HCT116 (cell line): ENCODE measurements at regions of chr22 and their contacts with region 1.

Region 1: DNA sequence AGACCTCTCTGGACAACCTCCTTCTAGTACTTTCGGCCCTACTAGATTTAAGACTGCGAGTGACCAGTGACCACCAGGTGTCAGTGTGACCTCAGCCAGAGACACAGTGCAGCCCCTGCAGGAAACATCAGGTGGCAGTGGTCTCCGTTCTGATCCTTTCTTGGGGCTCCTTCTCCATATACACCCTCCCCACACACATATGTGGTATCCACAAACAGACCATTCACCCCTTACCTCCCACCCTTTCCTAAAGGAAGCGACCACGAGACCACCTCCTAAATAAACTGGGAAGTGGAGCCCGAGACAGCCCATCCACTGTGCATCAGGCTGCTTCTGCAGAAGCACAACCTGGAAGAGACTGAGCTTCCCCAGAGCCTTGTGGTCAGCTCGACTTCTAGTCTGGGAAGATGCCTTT is 38.5 kb upstream of the CYP2D6 start:
- DNase-seq: peak; percentile 56
- ATAC-seq: peak; percentile 95
- H3K4me3 ChIP-seq: no peak overlapping the region
- H3K27ac ChIP-seq: no peak overlapping the region
- H3K4me1 ChIP-seq: no peaks in the 10 kb centered on the region
- H3K27me3 ChIP-seq: no peaks in the 10 kb centered on the region
- CTCF ChIP-seq: peak; percentile 98 to 99 (median 99)
- POLR2A ChIP-seq: no peak
- RAD21 ChIP-seq: peak; percentile 96

Region 2: DNA sequence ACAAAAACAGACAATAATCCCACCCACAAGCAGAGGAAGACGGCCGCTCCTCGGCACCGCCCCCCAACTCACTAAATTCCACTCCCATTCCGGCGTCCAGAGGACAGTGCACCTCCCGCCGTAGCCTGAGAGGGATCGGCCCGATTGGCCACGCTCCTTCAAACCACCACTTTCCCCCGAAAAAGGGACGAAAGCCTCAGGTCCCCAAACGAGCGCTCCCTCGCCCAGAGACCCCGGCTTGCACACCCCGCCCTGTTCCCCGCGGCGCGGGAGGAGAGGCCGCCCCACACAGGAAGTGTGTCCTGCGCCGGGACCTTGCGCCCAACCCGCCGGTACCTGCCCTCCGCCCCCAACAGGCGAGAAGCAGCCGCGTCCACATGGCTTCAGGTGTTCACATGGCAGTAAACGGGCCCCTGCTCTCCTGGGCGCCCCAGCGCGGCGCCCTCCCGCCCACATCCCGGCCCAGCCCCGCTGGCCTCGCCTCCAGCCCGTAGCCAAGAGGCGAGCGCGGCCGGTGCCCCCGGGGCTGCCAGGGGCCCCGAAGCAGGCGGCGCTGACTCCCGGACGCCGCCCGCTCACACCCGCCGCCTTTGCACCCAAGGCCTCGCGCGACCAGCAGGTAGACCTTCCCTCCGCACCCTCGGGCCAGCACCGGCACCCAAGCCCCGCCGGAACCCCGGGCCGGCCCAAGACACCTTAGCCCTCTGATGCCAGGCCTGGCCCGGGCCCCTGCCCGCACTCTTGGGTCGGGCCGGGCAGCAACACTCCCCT is 100.5 kb after region 1 on chr22:
- CTCF ChIA-PET with region 1: no interaction called
- POLR2A ChIA-PET with region 1: no interaction called
- RAD21 ChIA-PET with region 1: interaction called in 1 of 2 experiments, 5 read pairs
- intact Hi-C with region 1: loop called (anchors 2 kb)
- DNase-seq: peak; percentile 48
- ATAC-seq: peak; percentile 81
- H3K4me3 ChIP-seq: peak overlapping the region; percentile 85 to 91
- H3K27ac ChIP-seq: peak overlapping the region; percentile 99
- H3K4me1 ChIP-seq: peaks cover 9 to 19% of the 10 kb centered on the region in 2 experiments; a peak in 3 of 4 replicates
- H3K27me3 ChIP-seq: no peaks in the 10 kb centered on the region
- CTCF ChIP-seq: peak in 1 of 3 experiments; percentile 18; a peak in 1 of 6 replicates
- POLR2A ChIP-seq: no peak
- RAD21 ChIP-seq: peak; percentile 17; the same call in 1 of the 2 replicates

Region 3: GRCh38 chr22:42313804-42314581 is 144.9 kb after region 1 on chr22:
- CTCF ChIA-PET with region 1: no interaction called
- POLR2A ChIA-PET with region 1: no interaction called
- RAD21 ChIA-PET with region 1: no interaction called
- intact Hi-C with region 1: loop called (anchors 1 kb)
- DNase-seq: peak; percentile 75
- ATAC-seq: peak; percentile 87
- H3K4me3 ChIP-seq: peak overlapping the region in 1 of 2 experiments; percentile 34; a peak in 2 of 4 replicates
- H3K27ac ChIP-seq: peak overlapping the region; percentile 38
- H3K4me1 ChIP-seq: peaks cover 46 to 65% of the 10 kb centered on the region in 2 experiments
- H3K27me3 ChIP-seq: no peaks in the 10 kb centered on the region
- CTCF ChIP-seq: peak; percentile 64 to 76 (median 67); a peak in 5 of 6 replicates
- POLR2A ChIP-seq: no peak
- RAD21 ChIP-seq: peak; percentile 77

Region 4: DNA sequence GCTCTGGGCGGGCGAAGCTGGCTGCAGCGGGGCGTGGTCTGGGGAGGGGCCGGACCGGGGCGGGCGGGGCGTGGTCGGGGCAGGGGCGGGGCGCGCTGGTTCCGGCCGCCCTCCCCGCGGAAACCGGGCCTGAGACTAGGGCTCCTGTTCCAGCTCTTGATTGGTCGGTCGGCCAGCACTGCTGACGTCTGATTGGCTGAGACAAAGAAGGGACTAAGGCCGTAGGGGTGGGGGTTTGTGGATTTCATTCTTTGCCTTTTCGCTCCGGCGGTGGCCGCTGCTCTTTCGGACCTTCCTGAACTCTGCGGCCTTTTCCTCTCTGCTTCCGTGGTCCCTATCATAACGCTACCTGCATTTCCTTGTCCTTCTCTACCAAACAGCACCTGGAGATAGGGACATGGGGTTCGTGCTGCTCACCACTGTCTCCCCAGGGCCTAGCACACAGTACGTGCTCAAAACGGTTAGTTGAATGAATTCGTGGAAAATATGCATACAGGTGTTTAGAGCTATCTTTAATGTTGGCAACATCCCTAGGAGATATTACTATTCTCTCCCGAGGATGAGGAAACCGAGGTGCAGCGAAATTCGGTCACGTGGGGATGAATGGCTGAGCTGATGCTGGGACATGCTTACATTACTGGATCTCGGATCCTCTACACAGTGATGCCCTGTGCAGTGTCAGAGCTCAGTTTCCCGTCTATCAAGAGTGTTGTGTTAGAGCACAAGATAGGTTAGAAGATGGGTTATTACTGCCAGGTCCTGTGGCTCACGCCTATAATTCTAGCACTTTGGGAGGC is 200.4 kb after region 1 on chr22:
- CTCF ChIA-PET with region 1: interaction called, 3 read pairs
- POLR2A ChIA-PET with region 1: no interaction called
- RAD21 ChIA-PET with region 1: no interaction called
- intact Hi-C with region 1: loop called (anchors 2 kb)
- DNase-seq: peak; percentile 88
- ATAC-seq: peak; percentile 95
- H3K4me3 ChIP-seq: peak overlapping the region; percentile 86 to 94
- H3K27ac ChIP-seq: peak overlapping the region; percentile 56
- H3K4me1 ChIP-seq: peaks cover 14 to 24% of the 10 kb centered on the region in 2 experiments
- H3K27me3 ChIP-seq: no peaks in the 10 kb centered on the region
- CTCF ChIP-seq: no peak
- POLR2A ChIP-seq: peak; percentile 60
- RAD21 ChIP-seq: no peak

Region 5: GRCh38 chr22:42437488-42438292 is 268.6 kb after region 1 on chr22:
- CTCF ChIA-PET with region 1: interaction called, 28 read pairs
- POLR2A ChIA-PET with region 1: no interaction called
- RAD21 ChIA-PET with region 1: no interaction called
- intact Hi-C with region 1: loop called (anchors 1 kb)
- DNase-seq: peak; percentile 51
- ATAC-seq: peak; percentile 91
- H3K4me3 ChIP-seq: peak overlapping the region; percentile 49 to 64
- H3K27ac ChIP-seq: no peak overlapping the region; the same call in 1 of the 2 replicates
- H3K4me1 ChIP-seq: peaks cover 0 to 18% of the 10 kb centered on the region in 2 experiments; a peak in 3 of 4 replicates
- H3K27me3 ChIP-seq: no peaks in the 10 kb centered on the region
- CTCF ChIP-seq: peak; percentile 96 to 99 (median 98)
- POLR2A ChIP-seq: no peak
- RAD21 ChIP-seq: peak; percentile 99

Region 6: DNA sequence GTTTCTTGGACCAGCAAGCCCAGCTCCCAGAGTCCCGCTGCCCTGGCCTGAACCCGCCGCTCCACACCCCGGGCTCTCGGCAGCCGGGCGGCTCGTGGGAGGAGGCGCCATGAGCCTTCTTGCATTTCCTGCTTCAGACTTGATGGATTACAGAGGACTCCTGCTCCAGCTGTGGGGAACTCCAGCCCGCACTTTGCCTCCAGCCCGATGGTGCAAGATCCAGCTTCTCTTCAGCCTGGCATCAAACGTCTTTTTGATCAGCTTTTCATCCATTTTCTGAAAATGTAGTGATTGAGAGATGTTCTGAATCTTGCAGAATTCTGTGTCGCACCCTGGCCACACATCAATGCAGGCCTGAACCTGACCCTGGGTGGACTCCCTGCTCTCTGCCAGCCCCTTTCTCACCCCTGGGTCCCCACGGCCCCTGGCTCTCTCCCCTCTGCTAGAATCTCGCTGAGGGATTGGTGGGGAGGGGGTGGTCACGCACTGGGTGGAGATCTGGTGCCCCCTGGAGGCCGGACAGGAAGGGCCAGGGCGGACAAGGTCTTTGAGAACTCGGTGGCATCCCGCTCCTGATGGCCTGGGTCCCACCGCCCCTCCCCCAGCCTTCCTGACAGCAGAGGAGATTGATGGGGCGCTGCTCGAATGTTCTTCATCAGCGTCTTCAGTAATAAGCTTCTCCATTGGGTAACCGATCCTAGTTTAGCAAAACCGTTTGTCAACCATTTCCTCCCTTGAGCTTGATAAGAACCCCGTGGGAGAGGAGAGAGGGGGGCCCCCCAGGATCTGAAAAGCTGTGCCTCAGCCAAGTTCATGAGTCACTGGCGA is 275.2 kb after region 1 on chr22:
- CTCF ChIA-PET with region 1: interaction called, 15 read pairs
- POLR2A ChIA-PET with region 1: no interaction called
- RAD21 ChIA-PET with region 1: no interaction called
- intact Hi-C with region 1: no loop called
- DNase-seq: peak; percentile 67
- ATAC-seq: peak; percentile 89
- H3K4me3 ChIP-seq: peak overlapping the region; percentile 40 to 49
- H3K27ac ChIP-seq: peak overlapping the region; percentile 29; the same call in 1 of the 2 replicates
- H3K4me1 ChIP-seq: peaks cover 11 to 21% of the 10 kb centered on the region in 2 experiments
- H3K27me3 ChIP-seq: no peaks in the 10 kb centered on the region
- CTCF ChIP-seq: peak; percentile 75 to 92 (median 90)
- POLR2A ChIP-seq: peak; percentile 44
- RAD21 ChIP-seq: peak; percentile 86

Region 7: DNA sequence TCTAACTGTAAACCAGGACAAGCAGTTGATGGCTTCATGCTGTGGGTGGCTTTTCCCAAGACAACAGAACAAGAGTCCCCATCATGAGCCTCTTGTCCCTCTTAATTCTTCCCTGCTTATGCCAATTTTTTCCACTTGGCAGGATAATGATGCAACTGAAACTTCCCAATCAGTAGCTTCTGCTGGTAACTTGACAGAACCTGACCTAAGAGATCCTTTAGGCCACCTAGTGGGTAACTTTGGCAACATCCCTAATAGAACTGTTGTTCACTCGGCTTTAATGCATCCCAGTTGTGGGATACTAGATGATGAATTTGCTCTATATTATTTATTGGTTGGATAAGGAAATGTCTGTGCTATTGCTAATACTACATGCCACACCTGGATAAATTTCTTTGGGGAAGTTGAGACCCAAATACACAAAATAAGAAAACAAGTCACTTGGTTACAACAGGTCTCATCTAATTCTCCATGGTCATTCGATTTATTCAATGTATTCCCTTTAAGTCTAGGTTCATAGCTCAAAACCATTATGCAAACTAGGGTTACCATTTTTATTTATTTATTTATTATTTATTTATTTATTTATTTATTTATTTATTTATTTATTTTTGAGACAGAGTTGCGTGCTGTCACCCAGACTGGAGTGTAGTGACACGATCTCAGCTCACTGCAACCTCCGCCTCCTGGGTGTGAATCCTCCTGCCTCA is 304.6 kb after region 1 on chr22:
- CTCF ChIA-PET with region 1: interaction called, 7 read pairs
- POLR2A ChIA-PET with region 1: no interaction called
- RAD21 ChIA-PET with region 1: no interaction called
- intact Hi-C with region 1: loop called (anchors 1 kb)
- DNase-seq: peak; percentile 73
- ATAC-seq: peak; percentile 97
- H3K4me3 ChIP-seq: no peak overlapping the region
- H3K27ac ChIP-seq: no peak overlapping the region
- H3K4me1 ChIP-seq: no peaks in the 10 kb centered on the region
- H3K27me3 ChIP-seq: peaks cover 5% of the 10 kb centered on the region; the same call in 1 of the 2 replicates
- CTCF ChIP-seq: peak; percentile 55 to 80 (median 78); a peak in 5 of 6 replicates
- POLR2A ChIP-seq: no peak
- RAD21 ChIP-seq: peak; percentile 67